ENCODE measurements at regions of chr22 and their contacts with region 1.

Region 1: GRCh38 chr22:23673826-23674690 is 16.8 kb upstream of the RGL4 start:
- DNase-seq: no peak
- H3K4me3 ChIP-seq: no peak overlapping the region
- H3K27ac ChIP-seq: no peak overlapping the region
- H3K4me1 ChIP-seq: no peaks in the 10 kb centered on the region
- H3K27me3 ChIP-seq: no peaks in the 10 kb centered on the region
- CTCF ChIP-seq: no peak

Region 2: DNA sequence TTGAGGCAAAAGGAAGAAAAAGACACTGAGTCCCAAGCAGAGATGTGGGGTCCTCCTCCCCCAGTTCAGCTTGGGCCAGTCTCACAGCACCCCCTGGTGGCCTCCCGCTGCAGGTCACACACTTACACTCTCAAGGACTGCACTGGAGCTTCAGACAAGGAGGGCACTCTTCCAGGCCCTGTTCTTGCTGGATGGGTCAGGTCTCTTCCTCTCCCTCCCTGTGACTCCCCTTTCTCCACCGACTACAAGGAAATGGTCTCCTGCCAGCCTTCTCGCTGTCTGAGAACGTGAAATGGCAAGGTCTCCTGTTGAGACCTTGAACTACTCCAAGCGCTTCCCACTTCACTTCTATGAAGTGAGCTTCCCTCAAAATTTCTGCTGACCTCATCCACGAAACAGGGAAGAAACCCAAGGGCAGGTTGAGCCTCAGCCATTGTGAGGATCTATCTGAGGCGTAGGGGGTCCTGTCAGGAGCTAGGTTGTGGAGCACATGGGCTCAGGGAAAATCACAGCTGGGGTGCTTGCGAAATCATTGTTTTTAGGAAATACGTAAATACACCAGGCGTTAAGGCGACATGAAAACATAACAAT is 82.8 kb before region 1 on chr22:
- CTCF ChIA-PET with region 1: no interaction called
- dilution Hi-C with region 1: loop called (anchors 5 kb)
- in situ Hi-C with region 1: no loop called
- intact Hi-C with region 1: no loop called
- DNase-seq: peak; percentile 11
- H3K4me3 ChIP-seq: no peak overlapping the region
- H3K27ac ChIP-seq: no peak overlapping the region
- H3K4me1 ChIP-seq: no peaks in the 10 kb centered on the region
- H3K27me3 ChIP-seq: no peaks in the 10 kb centered on the region
- CTCF ChIP-seq: peak; percentile 84

Region 3: DNA sequence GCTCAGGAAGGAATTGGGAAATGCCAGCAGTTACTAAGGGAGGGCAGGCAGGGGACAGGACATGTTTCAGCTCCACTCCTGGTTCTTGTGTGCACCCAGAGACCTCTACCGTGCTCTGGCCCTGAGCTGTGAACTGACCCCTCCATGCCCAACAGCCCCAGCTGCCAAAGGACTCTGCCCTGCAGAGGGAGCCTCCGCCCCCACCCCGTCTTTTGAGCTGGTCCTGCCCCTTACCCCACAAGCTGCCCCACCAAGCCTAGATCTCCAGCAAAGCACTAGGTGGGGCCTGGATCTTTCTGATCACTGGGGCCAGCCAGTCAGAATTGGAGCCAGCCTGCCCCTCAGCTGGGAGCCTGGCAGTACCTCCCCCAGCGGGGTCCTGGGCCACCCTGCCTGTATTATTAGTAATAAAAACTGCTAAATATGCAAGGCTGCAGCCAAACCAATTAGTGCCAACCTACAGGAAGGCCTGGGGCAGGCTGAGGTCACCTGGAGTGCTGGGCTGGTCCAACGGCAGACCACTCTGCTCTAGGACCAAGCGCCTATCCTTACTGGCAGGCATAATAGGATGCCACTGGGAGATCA is 18.1 kb before region 1 on chr22:
- CTCF ChIA-PET with region 1: no interaction called
- dilution Hi-C with region 1: no loop called
- in situ Hi-C with region 1: no loop called
- intact Hi-C with region 1: no loop called
- DNase-seq: no peak
- H3K4me3 ChIP-seq: no peak overlapping the region
- H3K27ac ChIP-seq: no peak overlapping the region
- H3K4me1 ChIP-seq: no peaks in the 10 kb centered on the region
- H3K27me3 ChIP-seq: no peaks in the 10 kb centered on the region
- CTCF ChIP-seq: no peak

Region 4: DNA sequence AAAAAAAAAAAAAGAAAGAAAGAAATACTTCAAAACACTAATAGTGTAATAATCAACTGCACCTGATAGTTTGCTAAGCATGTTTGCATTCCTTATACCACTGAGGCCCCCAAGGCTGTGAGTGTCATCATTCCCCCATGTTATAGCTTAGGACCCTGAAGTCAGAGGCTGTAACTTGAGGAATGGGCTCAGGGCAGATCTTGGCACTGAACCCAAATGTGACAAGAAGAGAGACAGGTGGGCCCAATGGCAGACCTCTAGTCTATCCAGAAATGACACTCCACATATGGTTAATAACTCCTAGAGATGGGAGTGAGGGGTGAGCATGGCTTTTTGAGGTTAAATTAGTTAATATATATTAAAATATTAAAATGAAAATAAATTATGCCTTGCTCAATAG is 63.6 kb after region 1 on chr22:
- CTCF ChIA-PET with region 1: no interaction called
- dilution Hi-C with region 1: loop called (anchors 5 kb)
- in situ Hi-C with region 1: no loop called
- intact Hi-C with region 1: no loop called
- DNase-seq: no peak
- H3K4me3 ChIP-seq: no peak overlapping the region
- H3K27ac ChIP-seq: no peak overlapping the region
- H3K4me1 ChIP-seq: peaks cover 1% of the 10 kb centered on the region
- H3K27me3 ChIP-seq: no peaks in the 10 kb centered on the region
- CTCF ChIP-seq: no peak

Region 5: DNA sequence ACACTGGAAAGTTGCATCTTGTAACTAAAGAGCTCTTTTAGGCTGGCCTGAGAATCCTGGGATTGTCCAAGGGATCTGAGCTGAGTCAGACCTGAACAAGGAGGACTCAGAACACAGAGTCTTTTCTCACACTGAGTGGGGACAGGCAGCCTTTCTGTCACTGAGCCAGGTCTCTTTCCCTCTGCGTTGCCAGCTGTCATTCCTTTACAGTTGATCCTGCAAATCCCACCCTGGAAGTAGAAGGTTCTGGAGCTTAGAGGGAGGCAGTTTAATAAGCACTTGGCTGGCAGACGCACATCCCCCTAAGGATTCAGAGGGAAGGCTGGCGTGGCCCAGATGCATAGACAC is 430.9 kb after region 1 on chr22:
- CTCF ChIA-PET with region 1: no interaction called
- dilution Hi-C with region 1: no loop called
- in situ Hi-C with region 1: no loop called
- intact Hi-C with region 1: no loop called
- DNase-seq: no peak
- H3K4me3 ChIP-seq: no peak overlapping the region
- H3K27ac ChIP-seq: no peak overlapping the region
- H3K4me1 ChIP-seq: no peaks in the 10 kb centered on the region
- H3K27me3 ChIP-seq: no peaks in the 10 kb centered on the region
- CTCF ChIP-seq: no peak